ENCODE measurements at regions of chr20 and their contacts with region 1.

Region 1: DNA sequence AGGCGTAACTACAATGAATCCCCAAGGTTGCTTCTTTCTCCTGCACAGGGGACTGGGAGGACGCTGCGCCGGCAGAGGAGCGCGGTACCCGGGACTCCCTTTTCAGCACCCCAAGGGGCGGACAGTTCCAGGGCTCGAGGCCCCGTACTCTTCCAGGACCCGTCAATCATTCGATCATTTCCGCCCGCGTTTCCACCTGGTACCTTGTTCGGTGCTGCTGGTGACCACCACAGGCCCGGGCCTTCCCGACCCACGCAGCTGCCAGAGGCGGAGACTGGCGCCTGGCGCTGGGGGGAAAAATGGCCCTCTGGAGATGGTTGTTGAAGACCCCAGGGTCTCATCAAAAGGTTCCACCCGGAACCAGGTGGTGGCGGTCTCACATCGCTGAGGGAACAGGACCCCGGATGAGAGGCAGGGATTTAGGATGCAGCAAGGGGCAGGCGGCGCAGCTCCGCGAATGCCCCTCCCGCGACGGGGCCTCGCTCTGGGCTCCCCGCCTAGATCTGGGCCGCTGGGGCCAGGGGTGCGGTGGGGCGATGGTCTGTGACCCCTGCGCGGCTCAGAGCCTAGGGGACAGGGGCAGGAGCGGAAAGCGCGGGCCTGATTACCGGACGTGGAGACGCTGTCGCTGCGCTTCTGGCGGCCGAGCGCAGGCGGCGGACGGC is 744 bp downstream of the VSX1 start:
- DNase-seq: no peak
- ATAC-seq: no peak
- H3K4me3 ChIP-seq: no peak overlapping the region
- H3K27ac ChIP-seq: no peak overlapping the region
- H3K4me1 ChIP-seq: peaks cover 24% of the 10 kb centered on the region
- H3K27me3 ChIP-seq: no peaks in the 10 kb centered on the region; the same call in 1 of the 2 replicates
- CTCF ChIP-seq: no peak; the same call in 1 of the 2 replicates

Region 2: DNA sequence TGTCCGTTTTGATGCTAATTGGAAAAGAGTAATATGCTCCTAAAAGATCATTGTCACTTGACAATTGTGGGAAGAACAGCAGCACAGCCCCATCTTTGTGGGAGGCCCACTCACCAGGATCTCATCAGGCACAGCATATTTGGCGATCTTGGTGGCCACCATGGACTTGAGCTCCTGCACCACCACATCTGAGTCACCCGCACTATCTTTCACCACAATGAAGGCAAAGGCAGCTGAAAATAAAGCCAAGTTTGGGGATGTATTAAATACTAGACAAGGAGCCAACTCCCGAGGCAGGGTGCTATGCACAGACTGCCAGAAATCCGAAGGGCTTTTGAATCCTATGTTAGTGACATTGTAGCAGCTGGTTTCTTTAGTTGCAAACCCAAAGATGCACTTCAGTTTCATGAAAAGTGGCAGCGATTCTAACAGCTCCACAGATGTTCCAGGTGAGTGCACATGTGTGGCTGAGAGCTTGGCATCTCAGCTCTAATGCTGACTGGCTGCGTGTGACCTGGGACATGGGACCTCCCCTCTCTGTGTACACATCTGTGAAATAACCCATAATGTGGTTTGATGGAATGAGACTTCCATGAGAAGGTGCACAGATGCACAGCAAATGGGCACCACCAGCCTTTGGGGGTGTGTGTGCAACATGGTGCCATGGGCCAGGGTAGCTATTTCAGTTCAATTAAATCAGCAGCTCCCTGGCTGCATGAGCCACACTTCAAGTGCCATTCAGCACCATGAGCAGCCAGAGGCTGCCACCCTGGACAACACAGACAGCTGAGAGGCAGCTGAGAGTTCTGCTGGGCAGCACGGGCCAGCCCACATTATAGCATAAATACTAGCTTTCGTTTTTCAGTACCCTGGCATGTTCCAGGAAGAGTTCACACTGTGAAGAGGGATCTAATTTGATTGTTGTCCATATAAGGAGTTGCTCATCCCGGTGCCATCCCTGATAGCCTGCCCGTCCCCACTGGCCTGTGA is 71.7 kb before region 1 on chr20:
- CTCF ChIA-PET with region 1: no interaction called
- POLR2A ChIA-PET with region 1: no interaction called
- in situ Hi-C with region 1: no loop called
- intact Hi-C with region 1: no loop called
- DNase-seq: no peak
- ATAC-seq: no peak
- H3K4me3 ChIP-seq: no peak overlapping the region
- H3K27ac ChIP-seq: no peak overlapping the region
- H3K4me1 ChIP-seq: no peaks in the 10 kb centered on the region
- H3K27me3 ChIP-seq: no peaks in the 10 kb centered on the region
- CTCF ChIP-seq: no peak

Region 3: GRCh38 chr20:25100914-25101313 is 19.7 kb after region 1 on chr20:
- CTCF ChIA-PET with region 1: interaction called, 12 read pairs
- POLR2A ChIA-PET with region 1: no interaction called
- in situ Hi-C with region 1: no loop called
- intact Hi-C with region 1: no loop called
- DNase-seq: no peak
- ATAC-seq: no peak
- H3K4me3 ChIP-seq: no peak overlapping the region
- H3K27ac ChIP-seq: no peak overlapping the region
- H3K4me1 ChIP-seq: no peaks in the 10 kb centered on the region
- H3K27me3 ChIP-seq: no peaks in the 10 kb centered on the region
- CTCF ChIP-seq: no peak

Region 4: GRCh38 chr20:25148181-25148981 is 67.2 kb after region 1 on chr20:
- CTCF ChIA-PET with region 1: no interaction called
- POLR2A ChIA-PET with region 1: no interaction called
- in situ Hi-C with region 1: no loop called
- intact Hi-C with region 1: no loop called
- DNase-seq: no peak
- ATAC-seq: no peak
- H3K4me3 ChIP-seq: no peak overlapping the region
- H3K27ac ChIP-seq: no peak overlapping the region
- H3K4me1 ChIP-seq: no peaks in the 10 kb centered on the region
- H3K27me3 ChIP-seq: no peaks in the 10 kb centered on the region
- CTCF ChIP-seq: no peak

Region 5: DNA sequence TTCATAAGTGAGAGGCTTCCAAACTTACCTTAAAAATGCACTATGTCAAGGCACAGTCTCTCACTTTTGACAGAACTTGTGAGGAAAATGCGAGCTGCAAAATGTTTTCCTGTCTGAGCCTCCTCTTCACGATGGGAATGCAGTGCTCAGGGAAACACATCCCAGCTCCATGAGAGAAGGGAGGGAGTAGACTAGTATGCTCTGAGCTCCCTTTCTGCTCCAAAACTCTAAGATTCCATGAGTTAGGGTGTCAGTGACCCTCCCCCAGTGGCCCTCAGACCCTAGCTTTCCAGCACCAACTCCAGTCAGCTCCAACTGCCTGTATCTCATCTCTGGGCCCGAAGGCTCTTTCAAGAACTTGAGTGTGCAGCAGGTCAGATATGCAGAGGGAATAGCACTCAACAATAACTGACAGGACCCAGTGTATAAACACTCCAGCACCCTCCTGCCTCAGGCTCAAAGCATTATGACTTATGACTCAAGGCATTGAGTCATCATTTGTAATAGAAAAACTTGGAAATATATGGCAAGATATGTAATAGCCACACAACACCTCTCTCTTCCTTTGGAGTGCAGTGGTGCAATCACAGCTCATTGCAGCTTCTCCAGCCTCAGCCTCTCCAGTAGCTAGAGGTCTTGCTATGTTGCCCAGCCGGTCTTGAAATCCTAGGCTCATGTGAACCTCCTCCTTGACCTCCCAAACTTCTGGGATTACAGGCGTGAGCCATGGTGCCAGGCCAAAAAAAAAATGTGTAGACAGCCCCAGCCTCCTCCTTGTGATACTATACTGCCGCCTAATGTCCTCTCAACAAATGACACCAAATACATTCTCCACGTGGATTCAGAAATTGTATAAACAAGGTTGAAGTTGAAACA is 97.6 kb after region 1 on chr20:
- CTCF ChIA-PET with region 1: no interaction called
- POLR2A ChIA-PET with region 1: no interaction called
- in situ Hi-C with region 1: no loop called
- intact Hi-C with region 1: loop called (anchors 5 kb)
- DNase-seq: peak; percentile 90
- ATAC-seq: peak; percentile 93
- H3K4me3 ChIP-seq: peak overlapping the region in 1 of 2 experiments; percentile 29; a peak in 2 of 4 replicates
- H3K27ac ChIP-seq: peak overlapping the region; percentile 76
- H3K4me1 ChIP-seq: peaks cover 35% of the 10 kb centered on the region
- H3K27me3 ChIP-seq: no peaks in the 10 kb centered on the region
- CTCF ChIP-seq: peak; percentile 95

Measured in Panc1 (cell line).